ENCODE measurements at regions of chr12 and their contacts with region 1.

Region 1: GRCh38 chr12:121230538-121230907 is 20.6 kb downstream of the P2RX4 start:
- DNase-seq: no peak
- ATAC-seq: peak; percentile 12
- H3K4me3 Mint-ChIP-seq: no peak overlapping the region
- H3K27ac Mint-ChIP-seq: peak overlapping the region; percentile 71
- H3K4me1 Mint-ChIP-seq: peaks cover 32% of the 10 kb centered on the region
- H3K27me3 Mint-ChIP-seq: no peaks in the 10 kb centered on the region

Region 2: DNA sequence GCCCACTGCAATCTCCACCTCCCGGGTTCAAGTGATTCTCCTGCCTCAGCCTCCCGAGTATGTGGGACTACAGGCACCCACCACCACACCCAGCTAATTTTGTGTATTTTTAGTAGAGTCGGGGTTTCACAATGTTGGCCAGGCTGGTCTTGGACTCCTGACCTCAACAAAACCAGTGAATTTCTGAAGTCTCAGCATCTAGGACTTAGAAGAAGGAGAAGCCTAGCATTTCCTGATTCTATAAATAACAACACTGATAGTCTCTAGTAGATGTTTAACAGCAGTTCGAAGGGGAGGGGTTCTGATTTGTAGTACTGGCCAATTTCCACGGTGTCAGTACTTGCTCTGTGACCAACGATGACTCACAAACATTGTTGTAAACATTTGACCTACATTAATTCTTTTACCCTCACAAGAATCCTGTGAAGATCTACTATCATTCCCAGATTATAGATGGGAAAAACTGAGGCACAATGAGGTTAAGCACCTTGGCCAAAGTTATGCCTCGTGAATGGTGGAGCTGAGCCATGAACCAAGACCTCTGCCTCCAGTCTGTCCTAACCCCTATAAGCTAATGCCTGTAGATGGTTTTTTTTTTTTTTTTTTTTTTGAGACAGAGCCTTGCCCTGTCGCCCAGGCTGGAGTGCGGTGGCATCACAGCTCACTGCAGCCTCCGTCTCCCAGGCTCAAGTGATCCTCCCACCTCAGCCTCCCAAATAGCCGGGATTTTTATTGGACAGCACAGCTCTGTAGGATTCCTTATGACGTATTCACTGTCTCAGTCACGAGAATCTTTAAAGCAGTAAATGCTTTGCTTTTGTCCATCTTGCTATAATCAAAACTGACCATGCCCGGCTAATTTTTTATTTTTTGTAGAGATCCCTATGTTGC is 15.4 kb before region 1 on chr12:
- CTCF ChIA-PET with region 1: interaction called, 22 read pairs
- DNase-seq: no peak
- ATAC-seq: peak; percentile 31
- H3K4me3 Mint-ChIP-seq: peak overlapping the region; percentile 61
- H3K27ac Mint-ChIP-seq: peak overlapping the region; percentile 85
- H3K4me1 Mint-ChIP-seq: peaks cover 51% of the 10 kb centered on the region
- H3K27me3 Mint-ChIP-seq: no peaks in the 10 kb centered on the region

Region 3: GRCh38 chr12:121240484-121241101 is 10.1 kb after region 1 on chr12:
- CTCF ChIA-PET with region 1: interaction called, 28 read pairs
- DNase-seq: peak; percentile 89
- ATAC-seq: peak; percentile 89
- H3K4me3 Mint-ChIP-seq: peak overlapping the region; percentile 61
- H3K27ac Mint-ChIP-seq: peak overlapping the region; percentile 88
- H3K4me1 Mint-ChIP-seq: peaks cover 40% of the 10 kb centered on the region
- H3K27me3 Mint-ChIP-seq: no peaks in the 10 kb centered on the region

Region 4: GRCh38 chr12:121264951-121265515 is 34.5 kb after region 1 on chr12:
- CTCF ChIA-PET with region 1: no interaction called
- DNase-seq: no peak
- ATAC-seq: no peak
- H3K4me3 Mint-ChIP-seq: no peak overlapping the region
- H3K27ac Mint-ChIP-seq: peak overlapping the region; percentile 21
- H3K4me1 Mint-ChIP-seq: no peaks in the 10 kb centered on the region
- H3K27me3 Mint-ChIP-seq: no peaks in the 10 kb centered on the region